Naive thymus-derived CD4-positive, alpha-beta T cell (primary cell): ENCODE measurements at regions of chr6 and their contacts with region 1.

Region 1: GRCh38 chr6:151690768-151691562 is 116.5 kb upstream of the ESR1 start:
- DNase-seq: peak in 6 of 9 donors; percentile 8 to 44 (median 28)
- ATAC-seq: peak; percentile 82
- H3K4me3 ChIP-seq: peak overlapping the region; percentile 45
- H3K4me3 Mint-ChIP-seq: peak overlapping the region; percentile 69 to 91 (median 86)
- H3K27ac ChIP-seq: peak overlapping the region; percentile 67
- H3K27ac Mint-ChIP-seq: peak overlapping the region; percentile 71 to 96 (median 86)
- H3K4me1 ChIP-seq: peaks cover 0 to 4% of the 10 kb centered on the region in 2 donors
- H3K4me1 Mint-ChIP-seq: peaks cover 0 to 34% (median 21%) of the 10 kb centered on the region in 7 donors
- H3K27me3 ChIP-seq: no peaks in the 10 kb centered on the region
- H3K27me3 Mint-ChIP-seq: peaks cover 0 to 10% (median 0%) of the 10 kb centered on the region in 5 donors

Region 2: GRCh38 chr6:151716526-151717202 is 25.7 kb after region 1 on chr6:
- CTCF ChIA-PET with region 1: interaction called, 14 read pairs
- POLR2A ChIA-PET with region 1: interaction called, 5 read pairs
- intact Hi-C with region 1: no loop called
- DNase-seq: peak in 6 of 9 donors; percentile 7 to 47 (median 38)
- ATAC-seq: no peak
- H3K4me3 ChIP-seq: no peak overlapping the region
- H3K4me3 Mint-ChIP-seq: peak overlapping the region in 8 of 10 donors; percentile 23 to 71 (median 50)
- H3K27ac ChIP-seq: no peak overlapping the region
- H3K27ac Mint-ChIP-seq: peak overlapping the region; percentile 44 to 93 (median 79)
- H3K4me1 ChIP-seq: peaks cover 4 to 8% of the 10 kb centered on the region in 2 donors
- H3K4me1 Mint-ChIP-seq: peaks cover 0 to 31% (median 14%) of the 10 kb centered on the region in 7 donors
- H3K27me3 ChIP-seq: no peaks in the 10 kb centered on the region
- H3K27me3 Mint-ChIP-seq: peaks cover 0 to 10% (median 0%) of the 10 kb centered on the region in 5 donors

Region 3: GRCh38 chr6:151757506-151758245 is 66.7 kb after region 1 on chr6:
- CTCF ChIA-PET with region 1: no interaction called
- POLR2A ChIA-PET with region 1: interaction called, 5 read pairs
- intact Hi-C with region 1: loop called (anchors 2 kb)
- DNase-seq: peak in 4 of 9 donors; percentile 10 to 30 (median 19)
- ATAC-seq: peak; percentile 44
- H3K4me3 ChIP-seq: no peak overlapping the region
- H3K4me3 Mint-ChIP-seq: peak overlapping the region in 8 of 10 donors; percentile 6 to 66 (median 32)
- H3K27ac ChIP-seq: peak overlapping the region; percentile 23
- H3K27ac Mint-ChIP-seq: peak overlapping the region; percentile 49 to 98 (median 84)
- H3K4me1 ChIP-seq: peaks cover 6 to 13% of the 10 kb centered on the region in 2 donors
- H3K4me1 Mint-ChIP-seq: peaks cover 10 to 50% (median 25%) of the 10 kb centered on the region in 7 donors
- H3K27me3 ChIP-seq: no peaks in the 10 kb centered on the region
- H3K27me3 Mint-ChIP-seq: peaks cover 0 to 3% (median 0%) of the 10 kb centered on the region in 5 donors

Region 4: GRCh38 chr6:152124429-152125074 is 433.6 kb after region 1 on chr6:
- CTCF ChIA-PET with region 1: interaction called, 24 read pairs
- POLR2A ChIA-PET with region 1: interaction called, 8 read pairs
- intact Hi-C with region 1: loop called (anchors 1 to 2 kb)
- DNase-seq: peak in 4 of 9 donors; percentile 8 to 42 (median 22)
- ATAC-seq: peak; percentile 42
- H3K4me3 ChIP-seq: no peak overlapping the region
- H3K4me3 Mint-ChIP-seq: no peak overlapping the region
- H3K27ac ChIP-seq: no peak overlapping the region
- H3K27ac Mint-ChIP-seq: peak overlapping the region in 6 of 9 donors; percentile 13 to 87 (median 74)
- H3K4me1 ChIP-seq: no peaks in the 10 kb centered on the region
- H3K4me1 Mint-ChIP-seq: peaks cover 0 to 6% (median 0%) of the 10 kb centered on the region in 7 donors
- H3K27me3 ChIP-seq: no peaks in the 10 kb centered on the region
- H3K27me3 Mint-ChIP-seq: no peaks in the 10 kb centered on the region

Region 5: GRCh38 chr6:152338335-152339125 is 647.6 kb after region 1 on chr6:
- CTCF ChIA-PET with region 1: interaction called, 3 read pairs
- POLR2A ChIA-PET with region 1: no interaction called
- intact Hi-C with region 1: loop called (anchors 1 to 2 kb)
- DNase-seq: peak; percentile 23 to 67 (median 51)
- ATAC-seq: peak; percentile 90
- H3K4me3 ChIP-seq: no peak overlapping the region
- H3K4me3 Mint-ChIP-seq: no peak overlapping the region
- H3K27ac ChIP-seq: no peak overlapping the region
- H3K27ac Mint-ChIP-seq: no peak overlapping the region
- H3K4me1 ChIP-seq: no peaks in the 10 kb centered on the region
- H3K4me1 Mint-ChIP-seq: peaks cover 0 to 5% (median 0%) of the 10 kb centered on the region in 7 donors
- H3K27me3 ChIP-seq: no peaks in the 10 kb centered on the region
- H3K27me3 Mint-ChIP-seq: peaks cover 0 to 11% (median 0%) of the 10 kb centered on the region in 5 donors

Region 6: DNA sequence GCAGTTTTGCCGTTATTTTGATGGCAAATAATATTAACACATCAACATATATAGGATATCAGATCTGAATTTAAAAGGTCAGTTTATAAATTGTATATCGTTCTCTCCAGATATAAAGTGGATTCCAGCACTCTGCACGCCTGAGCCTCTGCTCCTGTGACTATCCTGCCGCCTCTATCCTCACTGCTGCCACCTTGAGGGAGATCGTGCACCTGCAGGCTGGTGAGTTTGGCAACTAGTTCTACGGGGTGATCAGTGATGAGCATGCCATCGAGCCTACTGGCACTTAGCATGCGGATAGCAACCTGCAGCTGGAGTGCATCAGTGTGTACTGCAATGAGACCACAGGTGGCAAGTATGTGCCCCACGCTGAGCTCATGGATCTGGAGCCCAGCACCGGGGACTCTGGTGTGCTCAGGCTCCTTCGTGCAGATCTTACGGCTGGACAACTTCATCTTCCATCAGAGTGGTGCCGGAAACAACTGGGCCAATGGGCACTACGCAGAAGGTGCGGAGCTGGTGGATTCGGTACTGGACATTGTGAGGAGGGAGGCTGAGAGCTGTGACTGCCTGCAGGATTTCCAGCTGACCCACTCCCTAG is 1206.9 kb after region 1 on chr6:
- CTCF ChIA-PET with region 1: no interaction called
- POLR2A ChIA-PET with region 1: no interaction called
- intact Hi-C with region 1: loop called in 1 of 2 experiments (anchors 2 kb)
- DNase-seq: peak in 8 of 9 donors; percentile 23 to 67 (median 42)
- ATAC-seq: peak; percentile 83
- H3K4me3 ChIP-seq: no peak overlapping the region
- H3K4me3 Mint-ChIP-seq: no peak overlapping the region
- H3K27ac ChIP-seq: no peak overlapping the region
- H3K27ac Mint-ChIP-seq: no peak overlapping the region
- H3K4me1 ChIP-seq: no peaks in the 10 kb centered on the region
- H3K4me1 Mint-ChIP-seq: peaks cover 0 to 5% (median 0%) of the 10 kb centered on the region in 7 donors
- H3K27me3 ChIP-seq: no peaks in the 10 kb centered on the region
- H3K27me3 Mint-ChIP-seq: peaks cover 26 to 45% (median 32%) of the 10 kb centered on the region in 5 donors